Heart right ventricle (tissue), 16 donors: ENCODE measurements at regions of chrX and their contacts with region 1.

Region 1: DNA sequence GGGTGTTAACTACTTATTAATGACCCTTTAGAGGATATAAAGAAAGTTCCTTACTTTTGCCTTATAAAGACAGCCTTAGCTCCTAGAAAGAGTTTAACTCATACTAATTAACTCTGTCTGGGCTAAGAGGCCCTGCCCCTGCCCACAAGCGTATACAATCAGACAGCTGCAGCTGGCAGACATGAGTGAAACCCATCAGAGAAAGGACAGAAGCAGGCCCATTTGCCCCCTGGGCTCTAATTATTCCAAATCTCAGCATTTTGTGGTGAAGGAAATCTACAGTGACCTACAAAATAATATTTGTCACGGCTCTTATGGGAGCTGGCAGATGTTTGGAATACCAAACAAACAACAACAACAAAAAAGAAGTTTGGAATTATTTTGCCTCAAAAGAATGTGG is 71.8 kb downstream of the CHRDL1 start:
- DNase-seq: no peak
- ATAC-seq: no peak
- H3K4me3 ChIP-seq: no peak overlapping the region
- H3K27ac ChIP-seq: no peak overlapping the region
- H3K4me1 ChIP-seq: no peaks in the 10 kb centered on the region
- H3K27me3 ChIP-seq: peaks cover 0 to 41% (median 0%) of the 10 kb centered on the region in 7 donors
- CTCF ChIP-seq: no peak

Region 2: DNA sequence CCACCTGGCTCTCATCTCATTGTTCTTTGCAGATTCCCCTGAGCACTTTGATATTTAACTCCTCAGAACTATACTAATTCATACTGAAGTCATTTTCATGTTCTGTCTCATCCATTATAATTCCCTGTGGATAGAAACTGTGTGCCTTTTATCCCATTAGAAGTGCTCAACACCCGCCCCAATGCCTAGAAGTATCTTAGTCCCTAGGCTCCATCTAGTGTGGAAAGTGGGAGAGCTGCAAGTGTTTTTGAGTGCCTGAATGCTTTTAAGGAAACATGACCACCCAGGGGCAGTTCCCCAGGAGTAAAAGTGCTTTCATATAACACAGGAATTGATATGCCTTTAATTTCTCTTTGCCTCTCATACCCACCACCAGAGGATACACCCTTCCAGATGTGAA is 45.3 kb before region 1 on chrX:
- intact Hi-C with region 1: loop called in 1 of 10 experiments (anchors 2 kb)
- DNase-seq: no peak
- ATAC-seq: no peak
- H3K4me3 ChIP-seq: no peak overlapping the region
- H3K27ac ChIP-seq: no peak overlapping the region
- H3K4me1 ChIP-seq: no peaks in the 10 kb centered on the region
- H3K27me3 ChIP-seq: peaks cover 0 to 37% (median 0%) of the 10 kb centered on the region in 7 donors
- CTCF ChIP-seq: no peak